ENCODE measurements at regions of chr11 and their contacts with region 1.

Region 1: GRCh38 chr11:554824-555472 is 5.6 kb downstream of the LMNTD2 start:
- DNase-seq: no peak
- ATAC-seq: peak; percentile 77
- H3K4me3 ChIP-seq: no peak overlapping the region
- H3K27ac ChIP-seq: no peak overlapping the region
- H3K4me1 ChIP-seq: peaks cover 3% of the 10 kb centered on the region
- H3K27me3 ChIP-seq: peaks cover 57% of the 10 kb centered on the region
- CTCF ChIP-seq: peak; percentile 50
- POLR2A ChIP-seq: no peak
- RAD21 ChIP-seq: peak; percentile 50

Region 2: DNA sequence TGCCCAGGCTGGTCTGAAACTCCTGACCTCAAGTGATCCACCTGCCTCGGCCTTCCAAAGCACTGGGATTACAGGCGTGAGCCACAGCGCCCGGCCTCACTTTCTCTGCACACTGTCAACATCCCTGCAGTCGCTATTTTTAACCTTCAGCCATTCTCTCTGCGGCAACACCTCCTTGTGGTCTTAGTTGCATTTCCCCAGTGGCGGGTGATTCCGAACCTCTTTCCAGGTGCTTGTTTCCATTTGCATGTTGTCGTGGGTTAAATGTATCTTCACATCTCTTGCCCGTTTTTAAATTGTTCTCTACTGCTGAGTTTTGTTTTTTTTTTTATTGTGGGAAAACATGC is 74.3 kb after region 1 on chr11:
- CTCF ChIA-PET with region 1: no interaction called
- POLR2A ChIA-PET with region 1: no interaction called
- dilution Hi-C with region 1: no loop called
- in situ Hi-C with region 1: no loop called
- intact Hi-C with region 1: no loop called
- DNase-seq: no peak
- ATAC-seq: no peak
- H3K4me3 ChIP-seq: no peak overlapping the region
- H3K27ac ChIP-seq: no peak overlapping the region
- H3K4me1 ChIP-seq: peaks cover 4% of the 10 kb centered on the region; the same call in 1 of the 2 replicates
- H3K27me3 ChIP-seq: peaks cover 2% of the 10 kb centered on the region; the same call in 1 of the 2 replicates
- CTCF ChIP-seq: no peak
- POLR2A ChIP-seq: no peak
- RAD21 ChIP-seq: no peak

Region 3: GRCh38 chr11:727859-728748 is 173.2 kb after region 1 on chr11:
- CTCF ChIA-PET with region 1: no interaction called
- POLR2A ChIA-PET with region 1: no interaction called
- dilution Hi-C with region 1: no loop called
- in situ Hi-C with region 1: no loop called
- intact Hi-C with region 1: loop called (anchors 10 kb)
- DNase-seq: peak; percentile 72
- ATAC-seq: peak; percentile 81
- H3K4me3 ChIP-seq: no peak overlapping the region
- H3K27ac ChIP-seq: no peak overlapping the region
- H3K4me1 ChIP-seq: peaks cover 6% of the 10 kb centered on the region
- H3K27me3 ChIP-seq: peaks cover 10% of the 10 kb centered on the region; the same call in 1 of the 2 replicates
- CTCF ChIP-seq: peak; percentile 99
- POLR2A ChIP-seq: no peak
- RAD21 ChIP-seq: peak; percentile 62

Measured in IMR-90 (cell line).